ENCODE measurements at regions of chr1 and their contacts with region 1.

Region 1: GRCh38 chr1:183622884-183623785 is 12.4 kb downstream of the ARPC5 start:
- DNase-seq: no peak
- ATAC-seq: peak; percentile 94
- H3K4me3 ChIP-seq: no peak overlapping the region
- H3K27ac ChIP-seq: no peak overlapping the region
- H3K4me1 ChIP-seq: no peaks in the 10 kb centered on the region; the same call in 1 of the 2 replicates
- H3K27me3 ChIP-seq: no peaks in the 10 kb centered on the region
- CTCF ChIP-seq: peak; percentile 73 to 77 (median 77); a peak in 5 of 6 replicates
- EP300 ChIP-seq: no peak
- POLR2A ChIP-seq: peak; percentile 25; the same call in 1 of the 2 replicates
- RAD21 ChIP-seq: peak; percentile 86

Region 2: GRCh38 chr1:183471743-183472487 is 151.2 kb before region 1 on chr1:
- CTCF ChIA-PET with region 1: interaction called, 10 read pairs
- POLR2A ChIA-PET with region 1: no interaction called
- RAD21 ChIA-PET with region 1: interaction called, 3 read pairs
- SMC1A ChIA-PET with region 1: interaction called, 5 read pairs
- in situ Hi-C with region 1: loop called (anchors 10 kb)
- intact Hi-C with region 1: loop called (anchors 2 kb)
- DNase-seq: peak; percentile 90
- ATAC-seq: peak; percentile 69
- H3K4me3 ChIP-seq: peak overlapping the region; percentile 87
- H3K27ac ChIP-seq: peak overlapping the region; percentile 99
- H3K4me1 ChIP-seq: peaks cover 8% of the 10 kb centered on the region
- H3K27me3 ChIP-seq: no peaks in the 10 kb centered on the region
- CTCF ChIP-seq: peak in 2 of 3 experiments; percentile 21 to 38; a peak in 3 of 6 replicates
- EP300 ChIP-seq: no peak
- POLR2A ChIP-seq: peak; percentile 56
- RAD21 ChIP-seq: no peak

Region 3: DNA sequence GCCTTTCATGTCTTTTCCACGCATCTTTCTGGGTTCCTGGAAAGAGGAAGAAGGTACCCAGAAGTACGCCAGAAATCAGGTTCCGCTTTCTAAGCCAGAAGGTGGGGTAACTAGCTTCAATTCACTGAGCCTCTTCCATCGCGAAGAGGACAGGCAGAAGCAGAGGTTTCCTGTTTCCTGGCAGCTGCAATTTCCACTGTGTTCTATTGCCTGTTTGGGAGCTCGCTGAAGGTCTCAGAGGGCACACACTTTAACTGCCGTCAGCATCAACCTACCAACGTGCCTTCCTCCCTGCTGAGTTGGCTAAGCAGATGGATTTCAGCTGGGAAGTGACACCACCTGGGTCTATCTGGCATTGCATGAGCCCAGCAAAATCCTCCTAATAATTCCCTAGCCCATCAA is 42.9 kb before region 1 on chr1:
- CTCF ChIA-PET with region 1: interaction called, 9 read pairs
- POLR2A ChIA-PET with region 1: no interaction called
- RAD21 ChIA-PET with region 1: interaction called, 3 read pairs
- SMC1A ChIA-PET with region 1: interaction called, 10 read pairs
- in situ Hi-C with region 1: no loop called
- intact Hi-C with region 1: no loop called
- DNase-seq: no peak
- ATAC-seq: peak; percentile 63
- H3K4me3 ChIP-seq: no peak overlapping the region
- H3K27ac ChIP-seq: no peak overlapping the region
- H3K4me1 ChIP-seq: peaks cover 7% of the 10 kb centered on the region
- H3K27me3 ChIP-seq: no peaks in the 10 kb centered on the region
- CTCF ChIP-seq: peak; percentile 34; a peak in 4 of 6 replicates
- EP300 ChIP-seq: no peak
- POLR2A ChIP-seq: no peak
- RAD21 ChIP-seq: peak; percentile 32; the same call in 1 of the 2 replicates

Region 4: GRCh38 chr1:183604038-183604808 is 18.9 kb before region 1 on chr1:
- CTCF ChIA-PET with region 1: interaction called, 25 read pairs
- POLR2A ChIA-PET with region 1: interaction called, 7 read pairs
- RAD21 ChIA-PET with region 1: interaction called, 16 read pairs
- SMC1A ChIA-PET with region 1: interaction called, 30 read pairs
- in situ Hi-C with region 1: no loop called
- intact Hi-C with region 1: loop called (anchors 2 kb)
- DNase-seq: peak; percentile 89
- ATAC-seq: peak; percentile 71
- H3K4me3 ChIP-seq: no peak overlapping the region
- H3K27ac ChIP-seq: peak overlapping the region; percentile 64
- H3K4me1 ChIP-seq: peaks cover 61% of the 10 kb centered on the region
- H3K27me3 ChIP-seq: no peaks in the 10 kb centered on the region
- CTCF ChIP-seq: no peak
- EP300 ChIP-seq: peak; percentile 25 to 72; a peak in 2 of 4 replicates
- POLR2A ChIP-seq: no peak
- RAD21 ChIP-seq: no peak

Measured in GM12878 (cell line).